ENCODE measurements at regions of chr12 and their contacts with region 1.

Region 1: GRCh38 chr12:108856428-108857157 is 790 bp downstream of the SSH1 start:
- DNase-seq: peak; percentile 70 to 91
- ATAC-seq: peak; percentile 28 to 39
- H3K4me3 ChIP-seq: peak overlapping the region; percentile 64 to 97 (median 86)
- H3K27ac ChIP-seq: peak overlapping the region; percentile 90 to 98 (median 96)
- H3K4me1 ChIP-seq: peaks cover 52 to 61% of the 10 kb centered on the region in 2 donors
- H3K27me3 ChIP-seq: no peaks in the 10 kb centered on the region
- CTCF ChIP-seq: no peak
- POLR2A ChIP-seq: peak; percentile 48 to 58

Region 2: GRCh38 chr12:108691175-108691997 is 165.2 kb before region 1 on chr12:
- in situ Hi-C with region 1: no loop called
- intact Hi-C with region 1: loop called (anchors 2 kb)
- DNase-seq: peak; percentile 98 to 100
- ATAC-seq: peak; percentile 68 to 72
- H3K4me3 ChIP-seq: peak overlapping the region; percentile 34 to 49 (median 45)
- H3K27ac ChIP-seq: peak overlapping the region; percentile 92 to 98 (median 96)
- H3K4me1 ChIP-seq: peaks cover 86 to 91% of the 10 kb centered on the region in 2 donors
- H3K27me3 ChIP-seq: no peaks in the 10 kb centered on the region
- CTCF ChIP-seq: peak; percentile 44 to 68 (median 56)
- POLR2A ChIP-seq: peak; percentile 60 to 70

Region 3: DNA sequence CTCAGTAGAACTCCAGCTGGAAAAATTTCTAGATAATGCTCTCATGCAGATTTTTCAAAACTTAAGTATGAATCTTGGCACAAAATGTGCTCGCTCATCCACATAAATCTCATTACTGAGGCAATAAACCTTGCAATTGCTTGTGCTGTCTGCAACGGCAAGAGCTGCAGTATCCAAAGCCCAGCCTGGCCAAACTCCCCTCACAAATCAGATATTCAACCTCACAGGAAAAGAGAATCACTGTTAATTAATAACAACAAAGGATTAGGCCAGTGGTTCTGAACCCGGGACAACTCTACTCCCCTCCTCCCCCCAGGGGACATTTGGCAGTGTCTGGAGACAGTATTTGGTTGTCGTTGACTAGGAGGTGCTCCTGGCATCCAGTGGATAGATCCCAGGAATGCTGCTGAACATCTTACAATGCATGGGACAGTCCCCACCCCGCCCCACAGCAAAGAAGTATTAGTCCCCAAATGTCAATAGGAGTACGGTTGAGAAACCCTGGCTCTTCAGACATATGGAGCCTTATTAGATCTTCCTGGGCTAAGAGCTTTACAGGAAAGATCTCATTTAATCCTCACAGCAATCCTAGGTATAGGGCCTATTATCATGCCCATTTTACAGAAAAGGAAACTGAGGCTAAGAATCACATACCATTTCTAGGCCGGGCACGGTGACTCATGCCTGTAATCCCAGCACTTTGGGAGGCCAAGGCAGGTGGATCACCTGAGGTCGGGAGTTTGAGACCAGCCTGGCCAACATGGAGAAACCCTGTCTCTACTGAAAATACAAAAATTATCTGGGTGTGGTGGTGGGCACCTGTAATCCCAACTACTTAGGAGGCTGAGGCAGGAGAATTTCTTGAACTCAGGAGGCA is 105.8 kb before region 1 on chr12:
- in situ Hi-C with region 1: no loop called
- intact Hi-C with region 1: no loop called
- DNase-seq: no peak
- ATAC-seq: no peak
- H3K4me3 ChIP-seq: no peak overlapping the region
- H3K27ac ChIP-seq: no peak overlapping the region
- H3K4me1 ChIP-seq: peaks cover 0 to 3% of the 10 kb centered on the region in 2 donors
- H3K27me3 ChIP-seq: no peaks in the 10 kb centered on the region
- CTCF ChIP-seq: no peak
- POLR2A ChIP-seq: no peak

Region 4: GRCh38 chr12:108768591-108769500 is 87.7 kb before region 1 on chr12:
- in situ Hi-C with region 1: no loop called
- intact Hi-C with region 1: no loop called
- DNase-seq: no peak
- ATAC-seq: no peak
- H3K4me3 ChIP-seq: no peak overlapping the region
- H3K27ac ChIP-seq: no peak overlapping the region
- H3K4me1 ChIP-seq: peaks cover 26 to 30% of the 10 kb centered on the region in 2 donors
- H3K27me3 ChIP-seq: no peaks in the 10 kb centered on the region
- CTCF ChIP-seq: no peak
- POLR2A ChIP-seq: no peak

Region 5: GRCh38 chr12:108803428-108804105 is 53.0 kb before region 1 on chr12:
- in situ Hi-C with region 1: loop called in 2 of 4 experiments (anchors 10 kb)
- intact Hi-C with region 1: loop called (anchors 1 kb)
- DNase-seq: peak; percentile 69 to 80
- ATAC-seq: peak; percentile 61 to 70
- H3K4me3 ChIP-seq: peak overlapping the region in 1 of 4 donors; percentile 11
- H3K27ac ChIP-seq: peak overlapping the region; percentile 93 to 97 (median 96)
- H3K4me1 ChIP-seq: peaks cover 62% of the 10 kb centered on the region in 2 donors
- H3K27me3 ChIP-seq: no peaks in the 10 kb centered on the region
- CTCF ChIP-seq: peak; percentile 93 to 97 (median 95)
- POLR2A ChIP-seq: peak in 1 of 2 donors; percentile 11

Region 6: DNA sequence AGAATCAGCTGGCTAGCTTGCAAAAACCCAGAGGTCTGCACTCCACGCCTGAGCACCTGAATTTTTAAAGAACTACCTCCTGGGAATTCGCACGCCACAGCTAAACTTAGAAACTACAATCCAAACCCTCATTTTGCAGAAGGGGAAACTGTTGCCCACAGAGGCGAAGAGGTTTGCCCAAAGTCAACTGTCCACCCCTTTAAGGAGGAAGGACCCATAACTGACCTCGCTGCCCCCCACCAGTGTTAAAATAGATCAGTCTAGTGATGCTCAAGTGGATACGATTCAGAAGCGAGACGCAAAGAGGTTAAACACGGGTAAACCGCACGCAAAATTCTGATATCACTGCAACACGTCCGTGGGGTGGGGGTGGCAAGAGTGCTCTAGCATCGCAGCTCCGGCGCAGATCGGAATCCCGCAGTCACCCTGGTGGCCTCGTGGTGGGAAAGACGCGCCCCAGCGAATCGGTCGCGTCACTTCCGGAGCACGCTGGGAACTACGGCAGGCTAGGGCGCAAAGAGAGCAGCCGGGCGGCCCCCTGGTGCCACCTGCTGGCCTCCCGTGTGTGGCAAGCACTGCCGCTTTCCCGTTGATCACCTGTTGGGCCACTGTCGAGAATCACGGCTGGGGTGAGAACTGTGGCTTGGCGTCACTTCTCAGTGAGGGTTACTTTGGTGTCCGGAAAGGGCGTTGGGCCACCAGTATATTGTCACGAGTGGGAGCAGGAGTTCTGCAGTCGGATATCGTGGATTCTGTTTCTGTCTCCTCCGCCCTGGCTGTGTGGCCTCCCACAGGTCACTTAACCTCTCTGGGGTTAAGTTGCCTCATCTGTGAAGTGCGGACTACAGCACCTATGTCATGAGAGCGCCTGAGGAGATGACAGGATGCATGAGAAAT is 236.7 kb after region 1 on chr12 and contains the start of gene ALKBH2:
- in situ Hi-C with region 1: no loop called
- intact Hi-C with region 1: loop called (anchors 5 kb)
- DNase-seq: peak; percentile 89 to 92
- ATAC-seq: peak; percentile 69 to 72
- H3K4me3 ChIP-seq: peak within 1 kb of the TSS; percentile 61 to 93 (median 64)
- H3K27ac ChIP-seq: peak within 1 kb of the TSS; percentile 79 to 88 (median 81)
- H3K4me1 ChIP-seq: peaks cover 22 to 23% of the 10 kb centered on the region in 2 donors
- H3K27me3 ChIP-seq: no peaks in the 10 kb centered on the region
- CTCF ChIP-seq: peak; percentile 93 to 99 (median 97)
- POLR2A ChIP-seq: peak; percentile 52 to 77
- total RNA-seq, gene ALKBH2: 8.7 to 22.5 (median 18.2) TPM

Measured in gastrocnemius medialis (tissue), 4 donors.